ENCODE measurements at regions of chr14 and their contacts with region 1.

Region 1: GRCh38 chr14:94439453-94440057 is 13.0 kb downstream of the SERPINA11 start:
- DNase-seq: no peak
- ATAC-seq: no peak
- H3K4me3 ChIP-seq: no peak overlapping the region
- H3K27ac ChIP-seq: no peak overlapping the region
- H3K4me1 ChIP-seq: no peaks in the 10 kb centered on the region
- H3K27me3 ChIP-seq: peaks cover 3 to 7% (median 4%) of the 10 kb centered on the region in 3 donors
- CTCF ChIP-seq: no peak

Region 2: DNA sequence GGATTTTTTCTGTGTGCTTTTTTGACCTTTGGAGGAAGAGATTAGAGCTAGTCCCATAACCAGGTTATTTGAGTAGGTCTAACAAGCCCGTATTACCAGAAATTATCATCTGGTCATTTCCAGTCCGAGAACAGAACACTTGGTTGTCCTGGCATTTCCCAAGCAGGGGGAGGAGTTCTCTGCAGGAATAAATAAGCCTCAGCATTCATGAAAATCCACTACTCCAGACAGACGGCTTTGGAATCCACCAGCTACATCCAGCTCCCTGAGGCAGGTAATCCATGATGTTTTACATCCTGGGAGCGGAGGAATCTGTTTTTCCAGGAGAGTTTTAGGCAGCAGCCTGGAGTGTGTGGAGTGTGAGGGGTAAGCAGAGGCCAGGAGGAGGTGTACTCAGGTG is 172.6 kb after region 1 on chr14 and contains the start of gene SERPINA3:
- intact Hi-C with region 1: no loop called
- DNase-seq: no peak
- ATAC-seq: peak in 3 of 4 donors; percentile 27 to 58 (median 42)
- H3K4me3 ChIP-seq: no peak within 1 kb of the TSS
- H3K27ac ChIP-seq: no peak within 1 kb of the TSS
- H3K4me1 ChIP-seq: no peaks in the 10 kb centered on the region
- H3K27me3 ChIP-seq: peaks cover 0 to 2% (median 0%) of the 10 kb centered on the region in 3 donors
- CTCF ChIP-seq: no peak
- total RNA-seq, gene SERPINA3: 5.5 to 1,141 (median 125) TPM

Region 3: GRCh38 chr14:94681300-94682060 is 241.9 kb after region 1 on chr14:
- intact Hi-C with region 1: loop called in 1 of 2 experiments (anchors 5 kb)
- DNase-seq: no peak
- ATAC-seq: peak in 3 of 4 donors; percentile 75 to 83 (median 76)
- H3K4me3 ChIP-seq: no peak overlapping the region
- H3K27ac ChIP-seq: no peak overlapping the region
- H3K4me1 ChIP-seq: no peaks in the 10 kb centered on the region
- H3K27me3 ChIP-seq: no peaks in the 10 kb centered on the region
- CTCF ChIP-seq: peak; percentile 32

Measured in psoas muscle (tissue), 8 donors.